ENCODE measurements at regions of chr1 and their contacts with region 1.

Region 1: DNA sequence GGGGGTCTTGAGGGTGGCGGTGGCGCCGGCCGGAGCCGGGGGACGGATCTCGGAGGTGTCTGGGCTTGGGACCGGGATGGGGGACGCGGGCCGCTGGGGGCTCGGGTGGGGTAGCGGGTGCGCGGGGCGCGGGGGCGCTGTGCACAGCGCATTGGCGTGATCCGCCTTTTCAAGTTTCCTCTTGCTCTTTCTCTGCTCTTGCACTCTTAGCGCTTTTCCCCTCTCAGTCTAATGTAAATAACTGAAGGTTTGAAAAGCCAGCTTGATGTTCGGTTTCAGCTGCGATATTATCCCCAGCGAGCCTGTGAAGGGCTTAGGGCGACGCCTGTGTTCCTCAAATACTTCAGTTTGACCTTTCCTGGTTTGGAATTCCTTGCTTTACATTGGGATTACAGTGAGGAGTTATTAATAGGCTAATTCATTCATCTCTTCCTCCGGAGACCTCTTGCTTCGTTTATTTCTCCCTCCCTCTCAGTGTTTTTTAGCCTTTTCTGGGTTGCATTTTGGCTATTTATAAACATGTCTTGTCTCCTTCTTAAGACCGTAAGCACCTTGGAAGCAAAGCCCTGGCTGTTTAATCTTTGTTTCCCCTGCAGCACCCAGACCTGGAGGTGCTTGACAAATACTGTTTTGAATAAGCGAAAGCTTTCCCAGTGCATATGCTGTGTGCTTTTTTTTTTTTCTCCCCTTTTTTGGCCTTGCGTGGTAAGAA is 693 bp downstream of the RAB4A start:
- DNase-seq: no peak
- H3K4me3 ChIP-seq: peak overlapping the region; percentile 71 to 83 (median 78)
- H3K27ac ChIP-seq: peak overlapping the region; percentile 90 to 91
- H3K4me1 ChIP-seq: peaks cover 3 to 6% of the 10 kb centered on the region in 2 donors
- H3K27me3 ChIP-seq: no peaks in the 10 kb centered on the region
- CTCF ChIP-seq: no peak
- POLR2A ChIP-seq: no peak

Region 2: DNA sequence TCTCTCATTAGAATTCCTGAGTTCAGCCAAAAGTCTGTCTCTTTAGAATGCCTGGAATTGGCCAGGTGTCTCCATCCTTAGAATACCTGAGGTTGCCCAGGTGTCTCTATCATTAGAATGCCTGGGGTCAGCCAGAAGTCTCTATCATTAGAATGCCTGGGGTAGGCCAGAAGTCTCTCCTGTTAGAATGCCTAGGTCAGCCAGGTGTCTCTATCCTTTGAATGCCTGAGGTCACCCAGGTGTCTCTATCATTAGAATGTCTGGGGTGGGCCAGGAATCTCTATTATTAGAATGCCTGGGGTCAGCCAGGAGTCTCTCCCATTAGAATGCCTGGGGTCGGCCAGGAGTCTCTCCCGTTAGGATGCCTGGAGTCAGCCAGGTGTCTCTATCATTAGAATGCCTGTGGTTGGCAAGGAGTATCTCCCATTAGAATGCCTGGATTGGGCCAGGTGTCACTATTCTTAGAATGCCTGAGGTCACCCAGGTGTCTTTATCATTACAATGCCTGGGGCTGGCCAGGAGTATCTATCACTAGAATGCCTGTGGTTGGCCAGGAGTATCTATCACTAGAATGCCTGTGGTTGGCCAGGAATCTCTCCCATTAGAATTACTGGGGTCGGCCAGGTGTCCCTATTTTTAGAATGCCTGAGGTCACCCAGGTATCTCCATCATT is 741.4 kb before region 1 on chr1:
- intact Hi-C with region 1: loop called (anchors 5 kb)
- DNase-seq: no peak
- H3K4me3 ChIP-seq: no peak overlapping the region
- H3K27ac ChIP-seq: no peak overlapping the region
- H3K4me1 ChIP-seq: no peaks in the 10 kb centered on the region
- H3K27me3 ChIP-seq: no peaks in the 10 kb centered on the region
- CTCF ChIP-seq: no peak
- POLR2A ChIP-seq: no peak

Region 3: DNA sequence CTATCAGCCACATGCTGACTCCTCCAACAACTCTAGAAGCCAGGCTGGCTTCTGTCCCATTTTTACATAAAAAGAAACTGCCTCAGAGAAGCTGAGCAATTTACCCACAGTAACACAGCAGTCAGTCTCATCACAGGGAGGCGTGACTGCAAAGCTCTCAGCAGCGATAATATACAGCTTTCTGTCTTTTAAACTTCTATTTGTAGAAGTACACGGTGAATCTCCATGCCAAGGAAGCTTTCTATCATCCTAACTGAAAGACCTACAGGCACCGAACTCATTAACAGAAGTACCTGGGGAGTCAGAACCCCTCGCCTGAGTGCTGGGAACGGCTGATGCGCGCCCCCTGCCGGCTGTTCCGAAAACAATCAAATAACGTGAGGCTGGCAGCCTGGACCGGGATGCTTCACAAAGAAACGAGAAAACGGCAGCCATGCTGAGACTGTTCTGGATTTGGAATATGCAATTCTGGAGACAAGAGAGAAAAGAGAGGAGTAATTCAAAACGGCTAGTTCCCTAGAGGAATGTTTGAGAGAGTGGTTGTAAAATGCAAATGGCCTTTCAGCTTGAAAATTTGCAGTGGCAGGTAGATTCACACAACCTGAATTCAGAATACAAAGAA is 44.2 kb before region 1 on chr1:
- intact Hi-C with region 1: loop called (anchors 2 kb)
- DNase-seq: peak; percentile 86 to 88
- H3K4me3 ChIP-seq: no peak overlapping the region
- H3K27ac ChIP-seq: peak overlapping the region; percentile 23 to 96
- H3K4me1 ChIP-seq: peaks cover 15 to 17% of the 10 kb centered on the region in 2 donors
- H3K27me3 ChIP-seq: no peaks in the 10 kb centered on the region
- CTCF ChIP-seq: peak; percentile 81 to 93 (median 91)
- POLR2A ChIP-seq: no peak

Measured in breast epithelium (tissue), 4 donors.